ENCODE measurements at regions of chr2 and their contacts with region 1.

Region 1: GRCh38 chr2:177148477-177149154 is 64.0 kb upstream of the HNRNPA3 start:
- DNase-seq: peak; percentile 59 to 93
- H3K4me3 ChIP-seq: peak overlapping the region; percentile 14 to 60 (median 59); a peak in 7 of 8 replicates
- H3K27ac ChIP-seq: no peak overlapping the region
- H3K4me1 ChIP-seq: no peaks in the 10 kb centered on the region; a peak in 2 of 7 replicates
- H3K27me3 ChIP-seq: peaks cover 0 to 7% (median 1%) of the 10 kb centered on the region in 4 experiments; a peak in 3 of 7 replicates
- CTCF ChIP-seq: peak; percentile 89 to 90 (median 90)
- EP300 ChIP-seq: no peak
- POLR2A ChIP-seq: no peak
- RAD21 ChIP-seq: peak; percentile 73 to 82

Region 2: GRCh38 chr2:176118601-176119339 is 1029.8 kb before region 1 on chr2:
- CTCF ChIA-PET with region 1: interaction called, 11 read pairs
- POLR2A ChIA-PET with region 1: no interaction called
- DNase-seq: peak in 1 of 2 experiments; percentile 69
- H3K4me3 ChIP-seq: no peak overlapping the region
- H3K27ac ChIP-seq: no peak overlapping the region
- H3K4me1 ChIP-seq: peaks cover 0 to 13% (median 6%) of the 10 kb centered on the region in 4 experiments; a peak in 4 of 7 replicates
- H3K27me3 ChIP-seq: peaks cover 93 to 100% (median 100%) of the 10 kb centered on the region in 4 experiments
- CTCF ChIP-seq: peak; percentile 56 to 67 (median 64)
- EP300 ChIP-seq: no peak
- POLR2A ChIP-seq: no peak
- RAD21 ChIP-seq: peak; percentile 15 to 37; a peak in 3 of 4 replicates

Region 3: GRCh38 chr2:176638167-176639015 is 510.2 kb before region 1 on chr2:
- CTCF ChIA-PET with region 1: interaction called, 13 read pairs
- POLR2A ChIA-PET with region 1: no interaction called
- DNase-seq: peak in 1 of 2 experiments; percentile 79
- H3K4me3 ChIP-seq: peak overlapping the region; percentile 34 to 68 (median 45)
- H3K27ac ChIP-seq: no peak overlapping the region
- H3K4me1 ChIP-seq: peaks cover 0 to 5% (median 0%) of the 10 kb centered on the region in 4 experiments; a peak in 2 of 7 replicates
- H3K27me3 ChIP-seq: peaks cover 12 to 35% (median 20%) of the 10 kb centered on the region in 4 experiments
- CTCF ChIP-seq: peak; percentile 56 to 79 (median 78)
- EP300 ChIP-seq: no peak
- POLR2A ChIP-seq: no peak
- RAD21 ChIP-seq: peak; percentile 81 to 88

Region 4: DNA sequence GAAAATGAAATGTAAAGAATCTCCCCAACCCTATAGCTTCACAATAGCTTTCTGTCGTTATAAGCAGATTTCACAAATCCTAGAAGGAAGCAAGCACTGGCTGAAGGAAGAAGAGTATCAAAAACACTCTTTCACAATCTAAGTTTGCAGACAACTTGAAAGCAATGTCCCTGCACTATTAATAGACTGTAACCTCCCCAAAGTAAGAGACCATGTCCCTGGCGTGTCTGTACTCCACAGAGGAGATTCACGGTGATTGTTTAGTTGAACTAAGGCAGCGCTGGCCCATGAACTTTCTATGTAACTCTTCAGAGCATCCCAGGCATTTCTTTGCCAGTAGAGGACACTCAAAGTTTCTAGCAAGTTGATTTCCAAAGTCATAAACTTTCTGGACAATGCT is 64.0 kb before region 1 on chr2:
- CTCF ChIA-PET with region 1: interaction called, 11 read pairs
- POLR2A ChIA-PET with region 1: no interaction called
- DNase-seq: no peak
- H3K4me3 ChIP-seq: no peak overlapping the region
- H3K27ac ChIP-seq: no peak overlapping the region
- H3K4me1 ChIP-seq: no peaks in the 10 kb centered on the region
- H3K27me3 ChIP-seq: no peaks in the 10 kb centered on the region
- CTCF ChIP-seq: no peak
- EP300 ChIP-seq: no peak
- POLR2A ChIP-seq: no peak
- RAD21 ChIP-seq: no peak

Region 5: DNA sequence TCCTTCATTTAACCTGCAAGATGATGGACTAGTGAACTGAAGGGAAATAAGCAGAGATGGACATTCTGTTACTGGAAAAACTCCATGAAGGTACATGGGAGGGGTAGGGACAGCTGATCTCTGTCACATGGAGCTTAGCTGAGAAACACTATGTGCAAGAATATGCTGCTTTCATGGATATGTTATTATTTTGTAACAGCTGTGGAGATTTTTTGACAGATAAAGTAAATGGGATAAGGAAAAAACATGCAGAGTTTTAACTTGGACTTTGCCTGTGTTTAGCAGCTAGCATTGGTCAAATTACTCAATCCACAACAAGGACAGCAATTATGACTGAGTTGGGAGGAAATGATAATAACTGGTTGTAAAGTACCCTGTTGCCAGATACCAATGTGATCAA is 35.2 kb after region 1 on chr2:
- CTCF ChIA-PET with region 1: no interaction called
- POLR2A ChIA-PET with region 1: no interaction called
- DNase-seq: no peak
- H3K4me3 ChIP-seq: no peak overlapping the region
- H3K27ac ChIP-seq: no peak overlapping the region
- H3K4me1 ChIP-seq: peaks cover 0 to 6% (median 4%) of the 10 kb centered on the region in 4 experiments; a peak in 2 of 7 replicates
- H3K27me3 ChIP-seq: no peaks in the 10 kb centered on the region
- CTCF ChIP-seq: no peak
- EP300 ChIP-seq: no peak
- POLR2A ChIP-seq: no peak
- RAD21 ChIP-seq: no peak

Region 6: DNA sequence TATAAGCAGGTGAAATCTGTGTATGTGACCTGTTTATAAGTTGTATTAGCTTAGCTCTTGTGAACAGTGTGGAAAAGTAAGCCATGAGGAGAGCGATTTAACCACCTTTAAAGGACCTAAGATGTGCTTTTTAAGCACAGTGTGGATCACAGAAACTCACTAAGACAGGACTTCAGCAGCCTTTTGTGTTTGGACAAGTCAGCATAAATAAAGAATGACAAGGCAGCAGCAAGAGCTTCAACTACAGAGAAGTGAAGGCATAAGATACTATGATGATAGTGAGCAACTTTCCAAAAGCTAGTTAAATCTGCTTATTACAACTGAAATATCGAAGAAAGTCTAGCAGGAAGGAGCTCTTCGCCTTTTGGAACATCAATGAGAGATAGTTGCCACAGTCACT is 72.9 kb after region 1 on chr2:
- CTCF ChIA-PET with region 1: no interaction called
- POLR2A ChIA-PET with region 1: no interaction called
- DNase-seq: no peak
- H3K4me3 ChIP-seq: no peak overlapping the region
- H3K27ac ChIP-seq: no peak overlapping the region
- H3K4me1 ChIP-seq: no peaks in the 10 kb centered on the region
- H3K27me3 ChIP-seq: no peaks in the 10 kb centered on the region
- CTCF ChIP-seq: no peak
- EP300 ChIP-seq: no peak
- POLR2A ChIP-seq: peak; percentile 22 to 42; a peak in 2 of 3 replicates
- RAD21 ChIP-seq: no peak